A549 (cell line): ENCODE measurements at regions of chr7 and their contacts with region 1.

Region 1: DNA sequence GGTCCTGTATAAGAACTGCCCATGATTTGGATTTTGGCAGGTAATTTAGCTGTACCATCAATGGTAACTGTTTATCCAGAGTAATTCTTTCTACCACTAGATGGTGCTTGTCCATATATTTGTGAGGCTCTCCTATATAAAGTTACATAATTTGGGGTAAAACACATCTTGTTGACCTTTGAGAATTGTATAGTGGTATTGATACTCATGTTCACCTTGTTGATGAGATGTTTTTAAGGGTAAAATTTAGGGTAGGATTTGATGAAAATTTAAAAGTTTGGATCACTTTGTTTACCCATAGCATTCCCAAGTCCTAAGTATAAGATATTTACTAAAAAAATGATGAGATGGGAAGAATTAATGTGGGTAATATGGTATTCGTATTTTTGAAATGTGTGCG is 31.6 kb downstream of the ST7 start:
- DNase-seq: peak; percentile 22 to 42
- ATAC-seq: peak; percentile 80 to 89
- H3K4me3 ChIP-seq: no peak overlapping the region
- H3K27ac ChIP-seq: no peak overlapping the region
- H3K4me1 ChIP-seq: no peaks in the 10 kb centered on the region
- CTCF ChIP-seq: peak; percentile 84
- EP300 ChIP-seq: no peak
- POLR2A ChIP-seq: no peak
- RAD21 ChIP-seq: peak; percentile 56 to 60

Region 2: DNA sequence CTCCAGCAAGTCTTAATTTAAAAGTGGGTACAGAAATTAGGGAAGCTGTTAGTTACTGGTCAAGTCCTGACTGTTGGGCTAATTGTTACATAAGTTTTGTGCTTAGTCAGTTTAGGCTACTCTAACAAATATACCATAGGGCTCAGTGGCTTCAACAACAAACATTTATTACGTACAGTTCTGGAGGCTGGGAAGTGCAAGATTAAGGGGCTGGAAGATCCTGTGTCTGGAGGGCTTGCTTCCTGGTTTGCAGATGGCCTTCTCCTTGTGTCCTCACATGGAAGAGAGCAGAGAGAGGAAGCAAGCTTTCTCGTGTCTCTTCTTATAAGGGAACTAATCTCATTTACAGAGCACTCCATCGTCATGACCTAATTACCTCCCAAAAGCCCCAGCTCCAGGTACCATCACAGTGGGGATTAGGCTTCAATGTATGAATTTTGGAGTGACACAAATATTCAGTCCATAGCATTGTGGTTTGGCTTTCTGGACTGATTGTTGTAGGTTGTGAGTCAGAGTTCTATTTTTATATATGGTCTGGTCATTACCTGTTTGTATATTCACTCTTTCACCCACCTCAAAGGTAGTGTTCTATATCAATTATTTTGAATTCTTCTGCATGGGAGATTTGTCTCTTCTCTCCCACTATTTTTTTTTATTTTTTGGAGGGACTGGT is 14.5 kb before region 1 on chr7:
- CTCF ChIA-PET with region 1: interaction called, 24 read pairs
- POLR2A ChIA-PET with region 1: no interaction called
- DNase-seq: no peak
- ATAC-seq: no peak; a peak in 1 of 6 replicates
- H3K4me3 ChIP-seq: no peak overlapping the region
- H3K27ac ChIP-seq: no peak overlapping the region
- H3K4me1 ChIP-seq: peaks cover 11% of the 10 kb centered on the region; the same call in 2 of the 3 replicates
- CTCF ChIP-seq: no peak
- EP300 ChIP-seq: no peak
- POLR2A ChIP-seq: no peak
- RAD21 ChIP-seq: no peak

Region 3: DNA sequence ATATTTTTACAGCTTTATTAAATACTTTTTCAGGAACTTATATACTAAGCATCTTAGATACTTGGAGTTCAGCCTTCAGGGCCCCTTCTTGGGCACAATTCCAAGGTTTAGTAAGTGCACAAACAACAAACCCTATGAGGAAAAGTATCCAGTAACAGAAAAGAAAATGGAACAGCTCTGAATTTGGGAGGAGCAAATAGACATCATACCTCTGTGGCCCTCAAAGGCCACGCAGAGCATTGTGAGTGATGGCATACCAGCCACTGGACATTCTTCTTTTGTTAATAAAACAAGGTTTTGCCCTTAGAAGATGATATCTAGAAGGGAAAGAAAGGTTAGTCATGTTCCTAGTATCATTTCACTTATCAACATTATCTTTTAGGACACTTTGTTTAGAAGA is 14.4 kb after region 1 on chr7:
- CTCF ChIA-PET with region 1: interaction called, 58 read pairs
- POLR2A ChIA-PET with region 1: no interaction called
- DNase-seq: no peak
- ATAC-seq: no peak
- H3K4me3 ChIP-seq: no peak overlapping the region
- H3K27ac ChIP-seq: no peak overlapping the region; a peak in 1 of 6 replicates
- H3K4me1 ChIP-seq: no peaks in the 10 kb centered on the region; the same call in 1 of the 3 replicates
- CTCF ChIP-seq: no peak
- EP300 ChIP-seq: no peak
- POLR2A ChIP-seq: no peak
- RAD21 ChIP-seq: no peak

Region 4: DNA sequence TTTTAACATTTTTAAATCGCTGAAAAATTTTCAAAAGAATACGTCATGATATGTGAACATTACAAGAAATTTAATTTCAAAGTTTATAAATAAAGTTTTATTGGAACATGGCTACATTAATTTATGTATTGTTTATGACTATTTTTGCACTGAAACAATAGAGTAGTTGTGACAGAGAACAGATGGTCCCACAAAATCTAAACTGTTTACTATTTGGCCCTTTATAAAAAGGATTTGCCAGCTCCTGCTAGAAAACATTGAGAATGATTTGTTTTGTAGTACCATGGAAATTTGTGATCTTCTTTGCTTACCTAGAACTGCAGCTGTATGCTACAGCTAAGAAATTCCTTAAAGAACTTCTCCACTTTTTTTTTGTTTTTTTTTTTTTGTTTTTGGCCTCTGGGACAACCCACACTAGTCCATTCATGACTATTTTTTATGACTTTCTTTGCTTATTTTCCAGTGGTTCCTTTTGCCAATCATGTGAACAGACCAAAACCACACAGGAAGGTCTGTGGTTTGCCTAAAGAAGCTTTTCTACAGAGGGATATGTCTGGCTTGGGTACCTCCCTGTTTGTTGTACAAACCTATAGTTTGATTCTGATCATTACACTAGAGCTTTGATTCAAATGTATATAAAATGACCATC is 24.1 kb after region 1 on chr7:
- CTCF ChIA-PET with region 1: interaction called, 10 read pairs
- POLR2A ChIA-PET with region 1: no interaction called
- DNase-seq: no peak
- ATAC-seq: no peak
- H3K4me3 ChIP-seq: no peak overlapping the region
- H3K27ac ChIP-seq: no peak overlapping the region
- H3K4me1 ChIP-seq: peaks cover 9% of the 10 kb centered on the region; the same call in 1 of the 3 replicates
- CTCF ChIP-seq: no peak
- EP300 ChIP-seq: no peak
- POLR2A ChIP-seq: no peak
- RAD21 ChIP-seq: no peak

Region 5: DNA sequence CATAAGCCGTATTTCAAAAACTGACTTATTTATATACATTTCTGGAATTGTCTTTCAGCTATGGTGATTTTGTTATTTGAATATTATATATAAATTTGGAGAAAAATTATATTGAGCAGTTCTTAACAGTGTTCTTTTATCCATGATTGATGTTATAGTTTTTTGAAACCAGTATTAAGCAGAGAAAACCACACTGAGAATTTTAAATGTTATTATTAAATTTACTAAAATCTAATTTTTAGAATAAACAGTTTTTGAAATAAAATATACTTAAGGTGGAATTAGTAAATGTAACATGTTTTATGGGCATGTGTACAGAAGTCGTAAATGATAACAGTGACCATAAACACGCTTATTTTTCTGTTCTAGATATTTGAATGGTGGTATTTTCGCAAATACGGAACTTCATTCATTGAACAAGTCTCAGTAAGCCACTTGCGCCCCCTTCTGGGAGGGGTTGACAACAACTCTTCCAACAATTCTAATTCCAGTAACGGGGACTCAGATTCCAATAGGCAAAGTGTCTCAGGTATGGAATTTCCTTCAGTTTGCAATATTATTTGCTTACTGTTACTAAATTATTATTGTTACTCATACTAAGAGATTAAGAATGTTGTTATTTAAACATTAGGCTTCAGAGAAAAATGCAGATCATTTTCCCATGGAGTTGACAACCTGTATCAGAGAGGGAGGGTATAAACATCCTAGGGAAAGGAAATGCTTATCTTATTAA is 134.4 kb after region 1 on chr7:
- CTCF ChIA-PET with region 1: interaction called, 12 read pairs
- POLR2A ChIA-PET with region 1: no interaction called
- DNase-seq: peak in 1 of 2 experiments; percentile 79
- ATAC-seq: peak; percentile 61 to 81; a peak in 4 of 6 replicates
- H3K4me3 ChIP-seq: no peak overlapping the region
- H3K27ac ChIP-seq: no peak overlapping the region
- H3K4me1 ChIP-seq: peaks cover 22% of the 10 kb centered on the region
- CTCF ChIP-seq: peak; percentile 93
- EP300 ChIP-seq: no peak
- POLR2A ChIP-seq: no peak
- RAD21 ChIP-seq: peak; percentile 89 to 90

Region 6: DNA sequence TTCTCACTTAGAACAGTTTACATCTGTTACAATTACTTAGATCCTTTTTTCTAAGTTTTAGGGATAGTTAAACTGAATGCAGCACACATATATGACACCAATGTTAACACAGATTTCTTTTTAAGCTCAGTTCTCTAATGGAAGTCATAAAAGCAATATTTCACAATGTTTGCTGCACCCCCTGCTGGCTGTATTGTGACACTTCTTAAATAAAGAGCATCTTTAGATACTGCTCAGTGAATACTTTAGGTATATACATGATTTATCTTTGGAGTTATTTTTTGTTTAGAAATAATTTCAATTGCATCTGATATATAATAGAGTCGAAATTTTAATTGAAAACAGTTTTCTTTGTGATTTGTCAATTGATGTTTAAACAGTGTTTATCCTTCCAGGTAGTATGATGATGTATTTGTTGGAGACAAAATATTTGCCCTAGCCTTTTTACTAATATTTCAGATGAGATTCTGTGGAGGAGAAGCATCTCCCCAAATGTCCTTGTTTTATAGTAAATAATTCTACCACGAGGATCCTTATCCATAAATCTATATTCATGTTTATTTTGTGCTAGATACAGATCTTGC is 142.8 kb after region 1 on chr7:
- CTCF ChIA-PET with region 1: interaction called, 21 read pairs
- POLR2A ChIA-PET with region 1: no interaction called
- DNase-seq: peak in 1 of 2 experiments; percentile 69
- ATAC-seq: peak; percentile 64 to 71; a peak in 4 of 6 replicates
- H3K4me3 ChIP-seq: no peak overlapping the region
- H3K27ac ChIP-seq: no peak overlapping the region; a peak in 1 of 6 replicates
- H3K4me1 ChIP-seq: peaks cover 74% of the 10 kb centered on the region
- CTCF ChIP-seq: peak; percentile 87
- EP300 ChIP-seq: no peak
- POLR2A ChIP-seq: no peak
- RAD21 ChIP-seq: peak; percentile 61 to 70